ENCODE measurements at regions of chrX and their contacts with region 1.

Region 1: GRCh38 chrX:130165703-130166502 is at the start of gene AIFM1:
- DNase-seq: peak; percentile 89
- ATAC-seq: peak; percentile 94
- H3K4me3 ChIP-seq: peak within 1 kb of the TSS; percentile 71 to 73
- H3K27ac ChIP-seq: peak within 1 kb of the TSS; percentile 67
- H3K4me1 ChIP-seq: peaks cover 0 to 13% of the 10 kb centered on the region in 2 experiments; a peak in 1 of 4 replicates
- H3K27me3 ChIP-seq: no peaks in the 10 kb centered on the region
- CTCF ChIP-seq: no peak
- POLR2A ChIP-seq: peak; percentile 66
- RAD21 ChIP-seq: no peak
- total RNA-seq, gene AIFM1: 50.0 TPM

Region 2: GRCh38 chrX:130110379-130111219 is 55.3 kb before region 1 on chrX and contains the start of gene ELF4:
- CTCF ChIA-PET with region 1: no interaction called
- POLR2A ChIA-PET with region 1: no interaction called
- RAD21 ChIA-PET with region 1: no interaction called
- intact Hi-C with region 1: loop called (anchors 1 kb)
- DNase-seq: no peak
- ATAC-seq: peak; percentile 57
- H3K4me3 ChIP-seq: peak within 1 kb of the TSS; percentile 57 to 62
- H3K27ac ChIP-seq: peak within 1 kb of the TSS; percentile 90
- H3K4me1 ChIP-seq: peaks cover 19 to 54% of the 10 kb centered on the region in 2 experiments
- H3K27me3 ChIP-seq: no peaks in the 10 kb centered on the region
- CTCF ChIP-seq: no peak
- POLR2A ChIP-seq: no peak
- RAD21 ChIP-seq: no peak
- total RNA-seq, gene ELF4: 19.2 TPM